Right ventricle myocardium inferior (tissue), 1 donor: ENCODE measurements at regions of chr17 and their contacts with region 1.

Region 1: DNA sequence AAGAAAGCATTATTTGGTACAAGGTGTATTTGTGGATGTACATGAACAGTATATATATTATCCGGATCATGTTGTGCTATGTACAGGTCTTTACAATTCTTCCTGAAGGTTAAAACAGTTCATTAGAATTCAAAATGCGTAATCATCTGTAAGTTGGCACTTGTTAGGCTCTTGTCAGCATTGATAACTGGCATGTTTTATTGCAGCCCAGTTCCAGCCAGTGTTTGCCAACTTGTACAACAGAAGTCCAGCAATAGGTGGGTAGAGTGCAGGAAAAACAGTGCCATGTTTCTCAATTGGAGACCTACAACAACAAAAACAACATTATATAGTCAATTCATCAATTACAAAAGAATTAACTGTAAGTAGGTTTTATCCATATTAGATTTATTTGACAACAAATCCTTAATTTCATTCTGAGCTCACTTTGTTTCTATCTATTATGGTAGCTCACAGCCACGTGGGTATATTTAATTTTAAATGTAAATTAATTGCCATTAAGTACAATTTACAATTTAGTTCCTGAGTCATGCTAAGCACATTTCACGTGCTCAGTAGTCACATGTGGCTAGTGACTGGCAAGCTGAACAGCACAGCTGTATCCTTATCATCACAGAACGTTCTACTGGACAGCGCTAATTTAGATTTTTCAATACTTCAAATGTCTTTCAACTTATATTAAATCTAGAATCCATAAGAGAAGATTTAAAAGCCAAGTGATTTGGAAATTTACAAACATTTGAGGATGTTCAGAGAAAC is 8.6 kb upstream of the ANKFY1 start:
- DNase-seq: no peak
- ATAC-seq: peak; percentile 69

Region 2: DNA sequence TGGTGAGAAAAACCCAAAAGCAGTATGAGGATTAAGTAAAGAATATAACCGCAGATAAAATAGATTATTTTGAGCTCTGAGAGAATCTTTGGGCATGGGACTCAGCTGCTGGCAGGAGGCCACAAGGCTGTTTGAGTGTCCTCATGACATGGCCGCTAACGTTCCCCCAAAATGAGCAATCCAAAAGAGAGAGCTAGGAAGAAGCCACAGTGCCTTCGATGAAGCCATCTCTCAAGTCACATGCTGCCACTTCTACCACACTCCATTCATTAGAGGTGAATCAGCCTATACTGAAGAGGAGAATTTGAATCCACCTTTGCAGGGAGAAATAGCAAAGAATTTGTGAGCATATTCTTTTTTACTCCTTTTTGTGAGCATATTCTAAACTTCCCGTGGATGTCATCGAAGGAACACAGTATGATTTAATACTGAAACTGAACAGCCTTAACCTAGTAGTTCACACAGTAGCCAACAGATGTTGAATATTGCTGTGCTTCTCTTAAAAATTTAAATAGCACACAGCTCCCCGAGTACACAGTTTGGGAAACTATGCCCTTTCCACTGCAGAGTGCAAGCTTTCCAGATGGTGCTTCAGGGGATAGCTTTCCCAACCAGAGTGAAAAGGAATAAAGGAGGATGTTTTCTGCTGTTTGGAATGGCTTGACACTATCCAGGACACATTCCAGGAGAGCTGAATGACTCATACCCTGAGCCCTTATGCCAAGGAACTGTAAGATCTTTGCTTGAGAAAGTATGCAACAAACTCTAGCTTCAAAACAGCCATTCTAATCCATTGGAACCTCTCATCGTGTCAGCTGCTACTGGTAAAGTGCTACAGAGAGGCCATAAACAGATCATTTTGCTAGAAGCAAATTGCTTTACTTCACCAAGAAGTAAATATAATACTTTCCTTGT is 42.5 kb before region 1 on chr17:
- intact Hi-C with region 1: loop called (anchors 5 kb)
- DNase-seq: peak; percentile 69
- ATAC-seq: peak; percentile 94